Activated naive CD4-positive, alpha-beta T cell treated with anti-CD3 and anti-CD28 coated beads for 36 hours (primary cell): ENCODE measurements at regions of chr19 and their contacts with region 1.

Region 1: DNA sequence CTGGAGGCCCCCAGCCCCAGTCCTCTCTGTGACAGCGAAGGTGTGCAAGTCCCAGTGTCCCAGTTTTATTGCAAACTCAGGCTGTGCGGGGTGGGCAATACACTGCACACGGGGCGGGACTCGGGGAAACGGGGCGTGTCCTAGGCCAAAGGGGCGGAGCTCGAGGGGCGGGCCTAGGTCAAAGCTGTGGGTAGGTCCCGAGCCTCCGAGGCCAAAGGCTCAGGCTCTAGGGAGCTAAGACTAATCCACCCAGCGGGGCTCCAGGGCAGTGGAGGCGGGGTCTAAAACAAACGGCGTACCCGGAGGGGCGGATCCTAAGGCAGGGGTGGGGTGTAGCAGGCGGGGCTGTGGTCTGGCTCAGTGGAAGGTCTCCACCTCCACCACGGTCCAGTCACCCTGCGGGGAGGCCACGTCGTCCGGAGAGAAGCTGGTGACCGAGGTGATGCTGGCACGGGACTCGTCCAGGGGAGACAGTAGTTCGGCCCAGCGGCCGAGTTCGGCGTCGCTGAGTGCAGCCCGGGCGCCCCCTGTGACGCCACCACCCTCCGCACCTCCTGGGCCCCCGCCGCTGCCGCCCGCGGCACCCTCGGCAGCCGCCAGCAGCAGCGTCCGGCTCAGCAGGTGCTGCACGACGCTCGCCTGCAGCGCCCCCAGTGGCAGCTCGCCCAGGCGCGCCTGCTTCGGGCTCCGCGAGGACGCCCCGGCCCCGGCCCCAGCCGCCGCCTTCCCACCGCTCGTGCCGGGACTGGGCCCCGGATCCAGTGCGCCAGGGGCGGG is 5.3 kb downstream of the PRR36 start:
- DNase-seq: peak; percentile 82
- H3K4me3 Mint-ChIP-seq: peak overlapping the region; percentile 68
- H3K27ac Mint-ChIP-seq: peak overlapping the region; percentile 59
- H3K4me1 Mint-ChIP-seq: peaks cover 46% of the 10 kb centered on the region
- H3K27me3 Mint-ChIP-seq: peaks cover 35% of the 10 kb centered on the region

Region 2: GRCh38 chr19:7841751-7842660 is 26.9 kb before region 1 on chr19:
- CTCF ChIA-PET with region 1: no interaction called
- intact Hi-C with region 1: no loop called
- DNase-seq: no peak
- H3K4me3 Mint-ChIP-seq: no peak overlapping the region
- H3K27ac Mint-ChIP-seq: no peak overlapping the region
- H3K4me1 Mint-ChIP-seq: no peaks in the 10 kb centered on the region
- H3K27me3 Mint-ChIP-seq: no peaks in the 10 kb centered on the region

Region 3: DNA sequence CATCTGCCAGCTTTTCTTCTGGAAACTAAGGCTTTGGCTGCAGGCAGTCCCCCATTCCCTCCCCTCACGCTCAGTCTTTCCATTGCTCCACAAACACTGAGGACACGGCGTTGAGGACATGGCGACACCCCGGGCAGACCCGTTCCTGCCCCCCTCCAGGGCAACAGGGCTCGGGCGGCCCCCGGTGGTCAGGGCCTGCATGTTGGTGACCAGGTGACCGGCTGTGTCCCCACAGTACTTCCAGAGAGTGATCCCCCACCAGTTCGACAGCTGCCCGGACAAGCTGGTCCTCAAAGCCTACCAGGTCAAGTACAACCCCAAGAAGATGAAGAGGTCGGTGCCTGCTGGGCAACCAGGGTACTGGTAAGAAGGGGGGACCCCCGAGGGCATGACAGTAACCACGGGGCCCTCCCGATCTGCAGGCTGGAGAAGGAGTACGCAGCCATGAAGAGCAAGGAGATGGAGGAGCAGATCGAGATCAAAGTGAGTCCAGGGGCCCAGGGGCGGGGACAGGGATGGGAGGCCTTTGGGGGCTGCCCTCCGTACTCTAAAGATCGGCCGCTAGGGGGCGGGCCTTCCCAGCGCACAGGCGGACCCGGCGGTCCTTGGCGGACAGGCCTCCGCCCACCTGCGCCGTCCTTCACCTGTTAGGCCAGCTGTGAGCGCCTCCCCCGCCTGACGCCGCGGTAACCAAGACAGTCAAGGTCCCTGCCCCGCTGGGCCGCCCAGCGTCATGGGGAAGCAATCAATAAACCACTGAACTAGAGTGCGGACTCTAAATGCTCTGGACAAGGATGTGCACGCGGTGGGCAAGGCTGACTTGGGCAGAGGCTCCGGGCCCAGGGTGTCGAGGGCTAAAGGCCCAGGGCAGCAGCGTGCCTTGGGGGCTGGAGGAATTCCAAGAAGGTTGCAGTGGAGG is 15.8 kb before region 1 on chr19:
- CTCF ChIA-PET with region 1: interaction called, 14 read pairs
- intact Hi-C with region 1: no loop called
- DNase-seq: peak; percentile 70
- H3K4me3 Mint-ChIP-seq: no peak overlapping the region
- H3K27ac Mint-ChIP-seq: no peak overlapping the region
- H3K4me1 Mint-ChIP-seq: peaks cover 5% of the 10 kb centered on the region
- H3K27me3 Mint-ChIP-seq: no peaks in the 10 kb centered on the region

Region 4: GRCh38 chr19:7903244-7904073 is 34.6 kb after region 1 on chr19 and contains the start of gene MAP2K7:
- CTCF ChIA-PET with region 1: interaction called, 14 read pairs
- intact Hi-C with region 1: loop called (anchors 2 kb)
- DNase-seq: peak; percentile 100
- H3K4me3 Mint-ChIP-seq: peak within 1 kb of the TSS; percentile 88
- H3K27ac Mint-ChIP-seq: peak within 1 kb of the TSS; percentile 84
- H3K4me1 Mint-ChIP-seq: peaks cover 24% of the 10 kb centered on the region
- H3K27me3 Mint-ChIP-seq: no peaks in the 10 kb centered on the region
- total RNA-seq, gene MAP2K7: 39.1 to 39.8 TPM

Region 5: GRCh38 chr19:7919610-7920518 is 51.0 kb after region 1 on chr19 and contains the start of gene SNAPC2:
- CTCF ChIA-PET with region 1: interaction called, 8 read pairs
- intact Hi-C with region 1: loop called (anchors 1 kb)
- DNase-seq: peak; percentile 96
- H3K4me3 Mint-ChIP-seq: peak within 1 kb of the TSS; percentile 81
- H3K27ac Mint-ChIP-seq: peak within 1 kb of the TSS; percentile 73
- H3K4me1 Mint-ChIP-seq: peaks cover 38% of the 10 kb centered on the region
- H3K27me3 Mint-ChIP-seq: peaks cover 25% of the 10 kb centered on the region
- total RNA-seq, gene SNAPC2: 10.9 to 12.4 TPM

Region 6: GRCh38 chr19:7970716-7971448 is 102.0 kb after region 1 on chr19:
- CTCF ChIA-PET with region 1: no interaction called
- intact Hi-C with region 1: no loop called
- DNase-seq: peak; percentile 55
- H3K4me3 Mint-ChIP-seq: no peak overlapping the region
- H3K27ac Mint-ChIP-seq: no peak overlapping the region
- H3K4me1 Mint-ChIP-seq: no peaks in the 10 kb centered on the region
- H3K27me3 Mint-ChIP-seq: no peaks in the 10 kb centered on the region

Region 7: DNA sequence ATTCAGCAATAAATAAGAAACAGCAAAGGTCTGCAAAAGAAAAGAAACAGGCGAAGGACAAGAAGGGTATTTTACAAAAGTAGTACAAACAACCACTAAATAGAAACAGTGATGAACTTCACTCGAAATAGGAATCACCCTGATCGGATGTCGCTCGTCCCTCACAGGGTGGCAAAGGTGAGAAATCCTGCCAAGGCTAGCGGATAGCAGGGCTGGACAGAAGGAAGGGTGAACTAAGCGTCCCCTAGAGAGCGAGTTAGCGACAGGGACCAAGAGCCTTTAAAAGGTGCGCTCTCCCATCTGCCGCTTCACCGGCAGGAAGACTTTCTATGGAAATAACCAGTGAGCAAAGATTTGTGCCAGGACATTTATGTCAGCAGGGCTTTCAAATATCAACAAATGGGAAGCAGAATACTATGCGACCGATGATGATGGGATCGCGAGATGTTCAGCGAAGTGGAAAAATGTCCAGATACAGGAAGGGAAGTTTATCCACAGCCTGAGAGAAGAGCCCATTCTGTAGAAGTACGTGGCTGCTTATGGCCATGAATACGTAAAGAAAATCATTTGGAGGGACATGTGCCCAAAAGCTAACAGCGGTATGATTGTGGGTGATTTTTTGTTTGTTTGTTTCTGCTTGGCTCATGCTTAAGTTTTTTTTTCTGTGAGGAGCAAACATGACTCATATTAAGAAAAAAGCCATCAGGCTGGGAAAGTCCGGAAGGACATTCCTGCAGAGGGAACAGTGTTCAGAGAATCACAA is 117.6 kb after region 1 on chr19:
- CTCF ChIA-PET with region 1: no interaction called
- intact Hi-C with region 1: no loop called
- DNase-seq: no peak
- H3K4me3 Mint-ChIP-seq: no peak overlapping the region
- H3K27ac Mint-ChIP-seq: no peak overlapping the region
- H3K4me1 Mint-ChIP-seq: peaks cover 3% of the 10 kb centered on the region
- H3K27me3 Mint-ChIP-seq: no peaks in the 10 kb centered on the region

Region 8: GRCh38 chr19:8005534-8006256 is 136.8 kb after region 1 on chr19 and contains the start of gene ELAVL1:
- CTCF ChIA-PET with region 1: interaction called, 3 read pairs
- intact Hi-C with region 1: loop called (anchors 10 kb)
- DNase-seq: peak; percentile 89
- H3K4me3 Mint-ChIP-seq: peak within 1 kb of the TSS; percentile 94
- H3K27ac Mint-ChIP-seq: peak within 1 kb of the TSS; percentile 78
- H3K4me1 Mint-ChIP-seq: peaks cover 35% of the 10 kb centered on the region
- H3K27me3 Mint-ChIP-seq: no peaks in the 10 kb centered on the region
- total RNA-seq, gene ELAVL1: 135 to 140 TPM